ENCODE measurements at regions of chr15 and their contacts with region 1.

Region 1: GRCh38 chr15:64010719-64011118 is 35.6 kb downstream of the DAPK2 start:
- DNase-seq: peak; percentile 74 to 97 (median 91)
- H3K4me3 ChIP-seq: peak overlapping the region; percentile 35
- H3K4me3 Mint-ChIP-seq: peak overlapping the region in 6 of 7 donors; percentile 77 to 84 (median 81)
- H3K27ac ChIP-seq: peak overlapping the region; percentile 71
- H3K27ac Mint-ChIP-seq: peak overlapping the region; percentile 95 to 100 (median 98)
- H3K4me1 ChIP-seq: peaks cover 33% of the 10 kb centered on the region
- H3K4me1 Mint-ChIP-seq: peaks cover 40 to 90% (median 58%) of the 10 kb centered on the region in 3 donors
- H3K27me3 ChIP-seq: no peaks in the 10 kb centered on the region
- H3K27me3 Mint-ChIP-seq: no peaks in the 10 kb centered on the region

Region 2: GRCh38 chr15:63655683-63656372 is 354.9 kb before region 1 on chr15:
- CTCF ChIA-PET with region 1: no interaction called
- POLR2A ChIA-PET with region 1: no interaction called
- DNase-seq: no peak
- H3K4me3 ChIP-seq: no peak overlapping the region
- H3K4me3 Mint-ChIP-seq: no peak overlapping the region
- H3K27ac ChIP-seq: no peak overlapping the region
- H3K27ac Mint-ChIP-seq: peak overlapping the region in 3 of 8 donors; percentile 27 to 56 (median 29)
- H3K4me1 ChIP-seq: no peaks in the 10 kb centered on the region
- H3K4me1 Mint-ChIP-seq: peaks cover under 1 to 2% (median 2%) of the 10 kb centered on the region in 3 donors
- H3K27me3 ChIP-seq: no peaks in the 10 kb centered on the region
- H3K27me3 Mint-ChIP-seq: peaks cover 0 to 2% of the 10 kb centered on the region in 2 donors

Region 3: DNA sequence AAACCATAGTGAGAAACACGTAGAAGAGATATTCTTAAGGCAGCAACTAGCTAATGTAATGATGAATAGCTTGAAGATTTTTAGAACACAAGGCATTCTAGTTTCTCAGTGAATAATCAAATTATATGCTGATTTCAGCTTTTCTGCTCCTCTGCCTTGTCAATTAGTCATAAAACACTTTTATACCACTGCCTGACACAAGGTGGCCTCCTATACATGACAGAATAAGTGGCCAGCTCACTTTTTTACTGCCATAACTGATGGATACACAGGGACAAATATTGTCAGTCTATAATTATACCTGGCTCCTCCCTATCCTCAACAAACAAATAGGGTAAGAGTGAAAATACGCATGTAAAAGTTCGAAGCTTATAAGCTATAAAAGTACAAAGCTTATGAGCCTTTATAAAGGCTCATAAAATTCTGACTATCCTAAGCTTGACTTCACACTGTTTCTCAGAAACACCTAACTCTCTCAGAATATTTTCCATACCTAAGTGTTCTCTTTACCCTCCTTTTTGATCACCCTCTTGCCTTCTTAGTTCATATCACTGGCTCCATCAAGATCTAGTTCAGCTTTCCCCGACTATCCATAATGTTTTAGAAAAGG is 258.5 kb before region 1 on chr15:
- CTCF ChIA-PET with region 1: interaction called, 26 read pairs
- POLR2A ChIA-PET with region 1: no interaction called
- DNase-seq: peak in 3 of 5 donors; percentile 42 to 58 (median 52)
- H3K4me3 ChIP-seq: no peak overlapping the region
- H3K4me3 Mint-ChIP-seq: no peak overlapping the region
- H3K27ac ChIP-seq: no peak overlapping the region
- H3K27ac Mint-ChIP-seq: peak overlapping the region in 4 of 8 donors; percentile 0 to 30 (median 22)
- H3K4me1 ChIP-seq: no peaks in the 10 kb centered on the region
- H3K4me1 Mint-ChIP-seq: peaks cover 0 to 5% (median 2%) of the 10 kb centered on the region in 3 donors
- H3K27me3 ChIP-seq: no peaks in the 10 kb centered on the region
- H3K27me3 Mint-ChIP-seq: no peaks in the 10 kb centered on the region

Region 4: GRCh38 chr15:63945007-63945788 is 65.5 kb before region 1 on chr15:
- CTCF ChIA-PET with region 1: interaction called, 31 read pairs
- POLR2A ChIA-PET with region 1: no interaction called
- DNase-seq: peak; percentile 44 to 74 (median 53)
- H3K4me3 ChIP-seq: no peak overlapping the region
- H3K4me3 Mint-ChIP-seq: peak overlapping the region in 1 of 7 donors; percentile 12
- H3K27ac ChIP-seq: no peak overlapping the region
- H3K27ac Mint-ChIP-seq: peak overlapping the region in 7 of 8 donors; percentile 46 to 90 (median 72)
- H3K4me1 ChIP-seq: peaks cover 4% of the 10 kb centered on the region
- H3K4me1 Mint-ChIP-seq: peaks cover 19 to 33% (median 27%) of the 10 kb centered on the region in 3 donors
- H3K27me3 ChIP-seq: no peaks in the 10 kb centered on the region
- H3K27me3 Mint-ChIP-seq: no peaks in the 10 kb centered on the region

Region 5: DNA sequence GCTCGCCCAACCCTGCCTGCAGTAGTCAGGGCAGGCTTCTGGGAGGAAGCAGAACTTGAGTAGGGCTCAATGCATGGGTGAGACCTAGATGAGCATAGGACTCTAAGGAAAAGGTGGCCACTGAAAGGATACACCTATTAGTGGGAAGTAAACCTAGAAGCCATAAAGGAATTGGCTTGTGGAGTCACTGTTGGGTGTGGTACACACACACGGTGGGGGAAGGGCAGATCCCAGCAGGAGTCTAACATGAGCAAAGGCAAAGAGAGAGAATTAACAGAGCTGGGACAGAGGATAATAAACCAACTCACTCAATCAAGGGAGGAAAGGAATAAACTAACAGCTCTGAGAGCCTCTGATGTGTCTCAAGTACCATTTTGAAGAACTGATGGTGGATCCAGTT is 12.5 kb after region 1 on chr15:
- CTCF ChIA-PET with region 1: interaction called, 10 read pairs
- POLR2A ChIA-PET with region 1: interaction called, 3 read pairs
- DNase-seq: no peak
- H3K4me3 ChIP-seq: no peak overlapping the region
- H3K4me3 Mint-ChIP-seq: no peak overlapping the region
- H3K27ac ChIP-seq: no peak overlapping the region
- H3K27ac Mint-ChIP-seq: peak overlapping the region in 1 of 8 donors; percentile 48
- H3K4me1 ChIP-seq: no peaks in the 10 kb centered on the region
- H3K4me1 Mint-ChIP-seq: peaks cover 0 to 13% (median 0%) of the 10 kb centered on the region in 3 donors
- H3K27me3 ChIP-seq: no peaks in the 10 kb centered on the region
- H3K27me3 Mint-ChIP-seq: no peaks in the 10 kb centered on the region

Region 6: GRCh38 chr15:64029110-64029509 is 18.4 kb after region 1 on chr15:
- CTCF ChIA-PET with region 1: interaction called, 9 read pairs
- POLR2A ChIA-PET with region 1: interaction called, 10 read pairs
- DNase-seq: no peak
- H3K4me3 ChIP-seq: no peak overlapping the region
- H3K4me3 Mint-ChIP-seq: peak overlapping the region in 5 of 7 donors; percentile 37 to 79 (median 45)
- H3K27ac ChIP-seq: no peak overlapping the region
- H3K27ac Mint-ChIP-seq: peak overlapping the region; percentile 81 to 97 (median 90)
- H3K4me1 ChIP-seq: peaks cover 6% of the 10 kb centered on the region
- H3K4me1 Mint-ChIP-seq: peaks cover 27 to 60% (median 42%) of the 10 kb centered on the region in 3 donors
- H3K27me3 ChIP-seq: no peaks in the 10 kb centered on the region
- H3K27me3 Mint-ChIP-seq: no peaks in the 10 kb centered on the region

Region 7: GRCh38 chr15:64046347-64047153 is 35.8 kb after region 1 on chr15 and contains the start of gene DAPK2:
- CTCF ChIA-PET with region 1: interaction called, 57 read pairs
- POLR2A ChIA-PET with region 1: interaction called, 5 read pairs
- DNase-seq: peak; percentile 61 to 77 (median 67)
- H3K4me3 ChIP-seq: peak within 1 kb of the TSS; percentile 51
- H3K4me3 Mint-ChIP-seq: peak within 1 kb of the TSS; percentile 82 to 89 (median 84)
- H3K27ac ChIP-seq: no peak within 1 kb of the TSS
- H3K27ac Mint-ChIP-seq: peak within 1 kb of the TSS in 7 of 8 donors; percentile 61 to 91 (median 88)
- H3K4me1 ChIP-seq: peaks cover 5% of the 10 kb centered on the region
- H3K4me1 Mint-ChIP-seq: peaks cover 12 to 29% (median 16%) of the 10 kb centered on the region in 3 donors
- H3K27me3 ChIP-seq: no peaks in the 10 kb centered on the region
- H3K27me3 Mint-ChIP-seq: peaks cover 4 to 8% of the 10 kb centered on the region in 2 donors
- total RNA-seq, gene DAPK2: 4.4 to 5.5 TPM

Region 8: DNA sequence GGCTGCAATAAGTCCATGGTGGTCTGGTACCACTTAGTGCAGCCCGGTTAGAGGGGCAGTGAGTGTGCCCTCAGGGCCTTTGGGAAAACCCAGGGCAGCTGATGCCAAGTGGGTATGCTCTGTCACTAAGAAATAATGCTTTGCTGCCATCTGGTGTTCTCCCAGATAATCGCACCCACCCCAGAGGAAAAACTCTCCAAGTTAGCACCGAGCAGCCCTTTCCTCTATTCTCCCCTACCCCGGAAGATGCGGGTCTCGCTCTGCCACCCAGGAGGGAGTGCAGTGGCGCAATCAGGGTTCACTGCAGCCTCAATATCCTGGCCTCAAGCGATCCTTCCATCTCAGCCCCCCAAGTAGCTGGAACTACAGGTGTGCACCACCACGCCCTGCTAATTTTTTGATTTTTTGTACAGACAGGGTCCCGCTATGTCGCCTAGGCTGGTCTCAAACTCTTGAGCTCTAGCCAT is 56.9 kb after region 1 on chr15:
- CTCF ChIA-PET with region 1: interaction called, 11 read pairs
- POLR2A ChIA-PET with region 1: no interaction called
- DNase-seq: peak; percentile 51 to 71 (median 59)
- H3K4me3 ChIP-seq: no peak overlapping the region
- H3K4me3 Mint-ChIP-seq: peak overlapping the region in 3 of 7 donors; percentile 15 to 46 (median 29)
- H3K27ac ChIP-seq: no peak overlapping the region
- H3K27ac Mint-ChIP-seq: peak overlapping the region in 3 of 8 donors; percentile 66 to 82 (median 76)
- H3K4me1 ChIP-seq: peaks cover 6% of the 10 kb centered on the region
- H3K4me1 Mint-ChIP-seq: peaks cover 8 to 9% (median 8%) of the 10 kb centered on the region in 3 donors
- H3K27me3 ChIP-seq: no peaks in the 10 kb centered on the region
- H3K27me3 Mint-ChIP-seq: no peaks in the 10 kb centered on the region

Region 9: GRCh38 chr15:64122936-64123351 is 112.2 kb after region 1 on chr15:
- CTCF ChIA-PET with region 1: no interaction called
- POLR2A ChIA-PET with region 1: no interaction called
- DNase-seq: no peak
- H3K4me3 ChIP-seq: no peak overlapping the region
- H3K4me3 Mint-ChIP-seq: no peak overlapping the region
- H3K27ac ChIP-seq: no peak overlapping the region
- H3K27ac Mint-ChIP-seq: no peak overlapping the region
- H3K4me1 ChIP-seq: no peaks in the 10 kb centered on the region
- H3K4me1 Mint-ChIP-seq: peaks cover 0 to 3% (median 0%) of the 10 kb centered on the region in 3 donors
- H3K27me3 ChIP-seq: no peaks in the 10 kb centered on the region
- H3K27me3 Mint-ChIP-seq: no peaks in the 10 kb centered on the region

Measured in CD8-positive, alpha-beta memory T cell (primary cell).